Ovary (tissue), 10 donors: ENCODE measurements at regions of chr22 and their contacts with region 1.

Region 1: DNA sequence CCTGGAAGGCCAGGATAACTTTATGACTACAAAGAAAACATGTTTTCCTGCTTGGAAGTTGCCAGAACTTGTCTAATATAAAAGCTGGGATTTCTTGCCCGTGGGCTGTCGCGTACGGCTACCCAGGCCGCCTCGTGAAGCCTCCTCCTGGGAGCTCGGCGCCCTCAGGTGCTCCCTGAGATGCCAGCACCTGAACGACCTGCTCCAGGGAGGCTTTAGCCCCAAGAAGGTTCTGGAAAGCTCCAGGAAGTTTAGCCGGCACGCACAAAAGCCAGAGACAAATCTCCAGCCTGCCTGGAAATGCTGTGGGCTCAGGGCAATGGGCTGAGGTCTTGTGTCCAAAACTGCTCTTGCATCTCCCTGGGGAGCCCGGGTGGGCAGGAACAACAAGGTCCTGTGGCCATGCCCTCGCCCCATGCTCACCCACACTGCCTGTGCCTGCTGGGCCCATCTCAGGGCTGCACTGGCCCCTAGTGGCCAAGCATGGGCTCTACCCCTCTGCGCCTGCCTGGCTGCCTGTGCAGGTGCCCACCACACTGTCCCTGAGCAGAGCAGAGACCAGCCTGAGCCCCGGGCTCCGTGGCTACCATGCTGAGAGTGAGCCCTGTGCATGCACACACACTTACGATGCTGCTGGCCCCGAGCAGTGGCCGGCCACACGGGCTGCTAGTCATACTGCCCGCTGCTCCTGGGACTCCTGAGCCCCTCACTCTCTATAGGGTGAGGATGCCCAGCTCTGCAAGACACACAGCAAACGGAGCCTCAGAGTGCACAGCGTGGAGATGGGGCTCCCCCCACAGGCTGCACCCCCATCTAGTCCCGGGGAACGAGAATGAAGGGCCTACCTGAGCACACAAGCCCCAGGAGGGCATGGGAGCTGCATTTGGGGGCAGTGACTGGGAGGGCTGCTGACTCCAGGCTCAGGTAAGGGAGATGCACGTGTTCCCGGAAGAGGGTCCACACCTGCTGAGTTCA is 4.9 kb upstream of the CELSR1 start:
- DNase-seq: peak; percentile 33 to 74 (median 57)
- H3K4me3 ChIP-seq: no peak overlapping the region
- H3K27ac ChIP-seq: no peak overlapping the region
- H3K4me1 ChIP-seq: no peaks in the 10 kb centered on the region
- H3K27me3 ChIP-seq: no peaks in the 10 kb centered on the region
- CTCF ChIP-seq: peak; percentile 41 to 58 (median 53)
- EP300 ChIP-seq: no peak
- POLR2A ChIP-seq: no peak

Region 2: DNA sequence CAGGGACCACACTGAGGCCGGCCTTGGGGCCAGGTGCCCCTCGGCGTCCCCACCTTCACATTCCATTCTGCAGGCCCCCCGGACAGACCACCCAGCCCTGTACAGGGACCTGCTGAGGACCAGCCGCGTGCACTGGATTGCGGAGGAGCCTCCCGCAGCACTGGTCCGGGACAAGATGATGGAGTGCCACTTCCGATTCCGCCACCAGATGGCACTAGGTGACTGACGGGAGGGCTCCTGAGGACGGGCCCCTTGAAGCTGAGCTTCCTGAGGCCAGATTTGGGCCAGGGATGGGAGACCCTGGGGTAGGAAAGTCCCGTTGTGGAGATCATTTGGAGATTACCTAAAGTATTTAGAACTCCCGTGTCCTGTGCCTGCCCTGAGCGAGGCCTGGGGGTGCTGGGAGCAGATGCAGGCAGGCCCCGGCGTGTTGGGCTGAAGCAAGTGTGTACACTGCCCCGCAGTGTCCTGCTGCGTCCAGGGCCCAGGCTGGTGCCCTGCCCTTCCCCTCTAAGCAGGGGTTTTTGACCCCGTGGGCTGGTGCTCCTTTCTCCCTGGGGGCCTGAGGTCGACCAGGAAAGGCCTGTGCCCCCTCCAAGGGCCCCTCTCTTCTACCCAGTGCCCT is 186.8 kb before region 1 on chr22:
- intact Hi-C with region 1: loop called in 3 of 4 experiments (anchors 10 kb)
- DNase-seq: peak; percentile 44 to 74 (median 58)
- H3K4me3 ChIP-seq: no peak overlapping the region
- H3K27ac ChIP-seq: no peak overlapping the region
- H3K4me1 ChIP-seq: no peaks in the 10 kb centered on the region
- H3K27me3 ChIP-seq: no peaks in the 10 kb centered on the region
- CTCF ChIP-seq: peak in 2 of 3 donors; percentile 19 to 34
- EP300 ChIP-seq: no peak
- POLR2A ChIP-seq: no peak

Region 3: GRCh38 chr22:46367707-46368191 is 174.5 kb before region 1 on chr22:
- intact Hi-C with region 1: loop called in 2 of 4 experiments (anchors 10 kb)
- DNase-seq: peak in 1 of 5 donors; percentile 21
- H3K4me3 ChIP-seq: no peak overlapping the region
- H3K27ac ChIP-seq: no peak overlapping the region
- H3K4me1 ChIP-seq: no peaks in the 10 kb centered on the region
- H3K27me3 ChIP-seq: no peaks in the 10 kb centered on the region
- CTCF ChIP-seq: no peak
- EP300 ChIP-seq: no peak
- POLR2A ChIP-seq: no peak